Psoas muscle (tissue), 8 donors: ENCODE measurements at regions of chr15 and their contacts with region 1.

Region 1: GRCh38 chr15:91469632-91470567 is 369.8 kb downstream of the SV2B start:
- DNase-seq: no peak
- ATAC-seq: no peak
- H3K4me3 ChIP-seq: no peak overlapping the region
- H3K27ac ChIP-seq: no peak overlapping the region
- H3K4me1 ChIP-seq: no peaks in the 10 kb centered on the region
- H3K27me3 ChIP-seq: no peaks in the 10 kb centered on the region
- CTCF ChIP-seq: no peak

Region 2: GRCh38 chr15:91413142-91413541 is 56.8 kb before region 1 on chr15:
- intact Hi-C with region 1: loop called in 1 of 2 experiments (anchors 5 kb)
- DNase-seq: no peak
- ATAC-seq: no peak
- H3K4me3 ChIP-seq: no peak overlapping the region
- H3K27ac ChIP-seq: no peak overlapping the region
- H3K4me1 ChIP-seq: peaks cover 9% of the 10 kb centered on the region
- H3K27me3 ChIP-seq: no peaks in the 10 kb centered on the region
- CTCF ChIP-seq: no peak

Region 3: GRCh38 chr15:91429973-91430372 is 39.9 kb before region 1 on chr15:
- intact Hi-C with region 1: loop called in 1 of 2 experiments (anchors 5 kb)
- DNase-seq: no peak
- ATAC-seq: no peak
- H3K4me3 ChIP-seq: no peak overlapping the region
- H3K27ac ChIP-seq: no peak overlapping the region
- H3K4me1 ChIP-seq: no peaks in the 10 kb centered on the region
- H3K27me3 ChIP-seq: peaks cover 0 to 4% (median 0%) of the 10 kb centered on the region in 3 donors
- CTCF ChIP-seq: no peak